ENCODE measurements at regions of chr7 and their contacts with region 1.

Region 1: DNA sequence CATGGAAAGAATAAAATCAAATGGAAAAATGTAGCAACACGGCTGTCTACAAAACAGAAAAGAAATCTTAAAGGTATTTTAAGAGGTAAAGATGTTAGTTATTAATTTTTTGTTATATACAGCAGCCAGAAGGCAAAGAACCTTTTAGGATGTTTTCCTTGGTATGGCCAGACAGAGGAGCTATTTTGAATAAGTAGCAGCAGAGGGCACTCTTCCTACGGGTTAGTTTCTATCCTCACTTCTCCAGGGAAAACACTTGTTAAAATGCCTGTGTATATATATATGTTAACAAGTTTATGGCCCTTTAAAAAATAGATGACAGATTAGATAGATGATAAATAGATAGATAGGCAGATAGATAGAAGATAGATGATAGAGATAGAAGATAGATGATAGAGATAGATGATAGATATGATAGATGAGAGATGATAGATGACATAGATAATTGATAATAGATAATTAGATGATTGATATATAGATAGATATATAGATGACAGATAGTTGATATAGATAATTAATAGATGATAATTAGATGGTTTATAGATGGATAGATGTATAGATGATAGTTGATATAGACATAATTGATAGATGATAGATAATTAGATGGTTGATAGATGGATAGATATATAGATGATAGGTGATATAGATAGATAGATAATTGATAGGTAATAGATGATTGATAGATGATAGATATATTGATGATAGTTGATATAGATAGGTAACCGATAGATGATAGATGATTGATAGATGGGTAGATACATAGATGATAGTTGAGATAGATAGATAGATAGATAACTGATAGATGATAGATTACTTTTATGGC is 57.8 kb upstream of the WIPF3 start:
- DNase-seq: no peak
- H3K4me3 ChIP-seq: no peak overlapping the region
- H3K27ac ChIP-seq: peak overlapping the region in 1 of 2 donors; percentile 19
- H3K4me1 ChIP-seq: peaks cover 11% of the 10 kb centered on the region
- H3K27me3 ChIP-seq: no peaks in the 10 kb centered on the region
- CTCF ChIP-seq: peak; percentile 24 to 69 (median 54)
- EP300 ChIP-seq: no peak
- POLR2A ChIP-seq: no peak

Region 2: GRCh38 chr7:29622335-29623265 is 125.9 kb before region 1 on chr7:
- intact Hi-C with region 1: loop called in 1 of 4 experiments (anchors 10 kb)
- DNase-seq: no peak
- H3K4me3 ChIP-seq: no peak overlapping the region
- H3K27ac ChIP-seq: no peak overlapping the region
- H3K4me1 ChIP-seq: no peaks in the 10 kb centered on the region
- H3K27me3 ChIP-seq: no peaks in the 10 kb centered on the region
- CTCF ChIP-seq: no peak
- EP300 ChIP-seq: no peak
- POLR2A ChIP-seq: no peak

Region 3: GRCh38 chr7:29652556-29652955 is 95.9 kb before region 1 on chr7:
- intact Hi-C with region 1: loop called in 1 of 4 experiments (anchors 10 kb)
- DNase-seq: no peak
- H3K4me3 ChIP-seq: no peak overlapping the region
- H3K27ac ChIP-seq: no peak overlapping the region
- H3K4me1 ChIP-seq: no peaks in the 10 kb centered on the region
- H3K27me3 ChIP-seq: no peaks in the 10 kb centered on the region
- CTCF ChIP-seq: no peak
- EP300 ChIP-seq: no peak
- POLR2A ChIP-seq: no peak

Region 4: GRCh38 chr7:29806208-29806994 is 57.9 kb after region 1 on chr7 and contains the start of gene WIPF3:
- intact Hi-C with region 1: loop called in 1 of 4 experiments (anchors 10 kb)
- DNase-seq: peak; percentile 58 to 80 (median 66)
- H3K4me3 ChIP-seq: peak within 1 kb of the TSS; percentile 58
- H3K27ac ChIP-seq: peak within 1 kb of the TSS; percentile 77 to 80
- H3K4me1 ChIP-seq: peaks cover 5% of the 10 kb centered on the region
- H3K27me3 ChIP-seq: no peaks in the 10 kb centered on the region
- CTCF ChIP-seq: peak in 1 of 3 donors; percentile 18
- EP300 ChIP-seq: no peak
- POLR2A ChIP-seq: peak; percentile 13
- total RNA-seq, gene WIPF3: 15.3 to 122 (median 49.8) TPM

Region 5: DNA sequence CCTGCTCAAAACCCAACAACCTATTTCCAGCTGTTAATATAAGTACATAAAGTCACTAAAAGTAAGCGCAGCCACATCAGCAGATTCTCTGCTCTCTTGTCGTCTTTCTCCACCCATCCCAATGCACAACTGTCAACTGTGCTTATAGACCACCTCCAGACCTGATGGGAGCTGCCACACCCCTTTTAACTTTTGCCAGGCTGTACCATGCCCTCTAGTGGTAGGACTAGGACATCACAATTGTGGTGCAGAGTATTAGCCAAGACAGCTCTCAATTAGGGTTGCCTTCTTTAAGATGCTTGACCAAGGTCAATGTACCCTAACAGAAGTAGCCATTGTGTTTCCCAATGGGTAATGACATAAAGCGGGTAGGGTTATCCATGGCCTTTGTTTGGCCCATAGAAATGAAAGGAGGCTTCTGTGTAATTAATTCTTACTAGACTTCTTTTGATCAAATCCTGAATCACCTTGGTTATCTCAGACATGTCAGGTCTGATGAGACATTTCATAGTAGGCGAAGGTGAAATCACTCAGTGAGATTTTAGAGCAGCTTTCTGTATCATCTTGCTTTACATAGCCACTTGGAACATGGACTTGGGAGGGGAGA is 173.0 kb after region 1 on chr7:
- intact Hi-C with region 1: loop called in 2 of 4 experiments (anchors 5 to 10 kb)
- DNase-seq: peak in 1 of 5 donors; percentile 56
- H3K4me3 ChIP-seq: no peak overlapping the region
- H3K27ac ChIP-seq: no peak overlapping the region
- H3K4me1 ChIP-seq: no peaks in the 10 kb centered on the region
- H3K27me3 ChIP-seq: no peaks in the 10 kb centered on the region
- CTCF ChIP-seq: peak; percentile 67 to 84 (median 81)
- EP300 ChIP-seq: no peak
- POLR2A ChIP-seq: no peak